ENCODE measurements at regions of chr5 and their contacts with region 1.

Region 1: GRCh38 chr5:14743601-14744295 is 79.2 kb downstream of the OTULIN start:
- DNase-seq: no peak
- H3K4me3 ChIP-seq: no peak overlapping the region
- H3K27ac ChIP-seq: peak overlapping the region; percentile 67 to 77
- H3K4me1 ChIP-seq: peaks cover 11 to 38% of the 10 kb centered on the region in 2 donors
- H3K27me3 ChIP-seq: no peaks in the 10 kb centered on the region
- CTCF ChIP-seq: no peak

Region 2: DNA sequence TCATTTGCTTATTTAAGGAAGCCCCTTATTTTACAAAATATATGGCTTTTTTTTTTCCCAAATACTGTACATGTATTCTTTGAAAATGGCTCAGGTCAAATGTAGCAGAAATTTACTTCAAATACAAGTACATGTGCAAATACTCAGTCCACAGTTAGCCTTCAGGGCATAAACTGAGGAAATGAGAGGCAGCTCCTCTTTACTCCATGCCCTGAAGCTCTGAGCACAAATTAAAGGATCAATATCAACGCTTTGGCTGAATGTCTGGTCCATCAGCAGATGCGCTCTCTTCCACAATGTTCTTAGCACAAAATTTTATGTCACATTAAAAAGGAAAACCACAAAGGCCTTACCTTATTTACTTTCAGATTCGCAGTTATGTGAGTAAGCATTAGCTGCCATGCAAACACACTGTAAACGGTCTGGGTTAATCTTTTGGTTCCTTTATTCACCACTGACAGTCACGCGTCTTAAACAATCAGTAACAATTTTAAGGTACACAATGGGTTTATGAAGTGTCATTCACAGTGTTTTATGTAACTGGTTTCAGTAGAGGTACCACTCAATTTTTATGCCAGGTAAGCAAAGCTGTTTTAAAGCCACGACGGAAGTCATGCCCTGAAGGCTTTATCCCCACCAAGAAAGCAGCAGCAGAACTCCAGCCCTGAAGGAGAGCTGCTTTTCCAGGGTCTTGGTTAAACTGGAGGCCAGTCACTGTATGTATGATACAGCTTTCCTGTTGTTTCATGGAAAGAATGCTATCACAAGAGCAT is 24.2 kb after region 1 on chr5:
- intact Hi-C with region 1: no loop called
- DNase-seq: no peak
- H3K4me3 ChIP-seq: no peak overlapping the region
- H3K27ac ChIP-seq: no peak overlapping the region
- H3K4me1 ChIP-seq: peaks cover 0 to 3% of the 10 kb centered on the region in 2 donors
- H3K27me3 ChIP-seq: no peaks in the 10 kb centered on the region
- CTCF ChIP-seq: no peak

Region 3: GRCh38 chr5:14816999-14817761 is 73.4 kb after region 1 on chr5:
- intact Hi-C with region 1: loop called (anchors 5 kb)
- DNase-seq: peak; percentile 31 to 88
- H3K4me3 ChIP-seq: peak overlapping the region in 1 of 2 donors; percentile 13
- H3K27ac ChIP-seq: peak overlapping the region; percentile 61 to 66
- H3K4me1 ChIP-seq: peaks cover 0 to 40% of the 10 kb centered on the region in 2 donors
- H3K27me3 ChIP-seq: no peaks in the 10 kb centered on the region
- CTCF ChIP-seq: no peak

Measured in ascending aorta (tissue), 2 donors.